ENCODE measurements at regions of chr16 and their contacts with region 1.

Region 1: GRCh38 chr16:22190776-22191531 is 15.1 kb upstream of the EEF2K start:
- DNase-seq: peak; percentile 99
- ATAC-seq: peak; percentile 66
- H3K4me3 Mint-ChIP-seq: peak overlapping the region; percentile 86
- H3K27ac Mint-ChIP-seq: peak overlapping the region; percentile 99
- H3K4me1 Mint-ChIP-seq: peaks cover 57% of the 10 kb centered on the region
- H3K27me3 Mint-ChIP-seq: no peaks in the 10 kb centered on the region

Region 2: DNA sequence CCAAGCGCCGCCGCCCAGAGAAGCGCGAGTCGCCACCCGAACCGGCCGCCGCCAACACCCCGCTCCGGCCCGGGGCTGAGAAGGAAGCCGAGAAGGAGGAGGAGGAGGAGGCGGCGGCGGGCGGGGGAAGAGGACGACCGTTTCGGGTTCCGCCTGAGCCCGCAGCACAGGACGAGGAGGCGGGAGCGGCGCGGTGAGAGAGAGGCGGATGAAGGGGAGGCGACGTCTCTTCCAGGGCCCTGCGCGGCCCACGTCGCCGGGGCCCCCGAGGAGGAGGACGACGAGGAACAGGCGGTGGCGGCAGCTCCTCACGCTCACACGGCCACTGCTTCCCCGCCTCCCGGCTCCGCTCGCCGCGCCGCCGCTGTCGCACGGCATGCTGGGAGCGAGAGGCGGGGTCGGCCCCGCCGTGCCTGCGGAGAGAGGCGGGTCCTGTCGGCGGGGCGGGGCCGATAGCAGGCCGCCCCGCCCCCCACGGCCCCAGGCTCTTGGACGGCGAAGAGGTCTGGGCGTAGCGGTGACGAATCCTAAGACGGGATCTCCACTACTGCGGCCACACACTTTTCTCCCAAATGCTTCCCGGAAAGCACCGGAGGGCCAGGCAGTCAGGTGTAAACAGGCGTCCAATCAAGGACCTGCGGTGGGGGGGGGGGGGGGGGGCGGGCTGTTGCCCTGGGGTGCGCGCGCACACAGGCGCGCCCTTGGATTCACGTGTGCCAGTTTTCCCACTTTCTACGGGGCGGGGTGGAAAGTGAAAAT is 688.9 kb before region 1 on chr16:
- CTCF ChIA-PET with region 1: no interaction called
- POLR2A ChIA-PET with region 1: no interaction called
- intact Hi-C with region 1: loop called in 1 of 2 experiments (anchors 5 kb)
- DNase-seq: peak; percentile 97
- ATAC-seq: peak; percentile 75
- H3K4me3 Mint-ChIP-seq: peak overlapping the region; percentile 83
- H3K27ac Mint-ChIP-seq: peak overlapping the region; percentile 93
- H3K4me1 Mint-ChIP-seq: peaks cover 24% of the 10 kb centered on the region
- H3K27me3 Mint-ChIP-seq: no peaks in the 10 kb centered on the region

Region 3: DNA sequence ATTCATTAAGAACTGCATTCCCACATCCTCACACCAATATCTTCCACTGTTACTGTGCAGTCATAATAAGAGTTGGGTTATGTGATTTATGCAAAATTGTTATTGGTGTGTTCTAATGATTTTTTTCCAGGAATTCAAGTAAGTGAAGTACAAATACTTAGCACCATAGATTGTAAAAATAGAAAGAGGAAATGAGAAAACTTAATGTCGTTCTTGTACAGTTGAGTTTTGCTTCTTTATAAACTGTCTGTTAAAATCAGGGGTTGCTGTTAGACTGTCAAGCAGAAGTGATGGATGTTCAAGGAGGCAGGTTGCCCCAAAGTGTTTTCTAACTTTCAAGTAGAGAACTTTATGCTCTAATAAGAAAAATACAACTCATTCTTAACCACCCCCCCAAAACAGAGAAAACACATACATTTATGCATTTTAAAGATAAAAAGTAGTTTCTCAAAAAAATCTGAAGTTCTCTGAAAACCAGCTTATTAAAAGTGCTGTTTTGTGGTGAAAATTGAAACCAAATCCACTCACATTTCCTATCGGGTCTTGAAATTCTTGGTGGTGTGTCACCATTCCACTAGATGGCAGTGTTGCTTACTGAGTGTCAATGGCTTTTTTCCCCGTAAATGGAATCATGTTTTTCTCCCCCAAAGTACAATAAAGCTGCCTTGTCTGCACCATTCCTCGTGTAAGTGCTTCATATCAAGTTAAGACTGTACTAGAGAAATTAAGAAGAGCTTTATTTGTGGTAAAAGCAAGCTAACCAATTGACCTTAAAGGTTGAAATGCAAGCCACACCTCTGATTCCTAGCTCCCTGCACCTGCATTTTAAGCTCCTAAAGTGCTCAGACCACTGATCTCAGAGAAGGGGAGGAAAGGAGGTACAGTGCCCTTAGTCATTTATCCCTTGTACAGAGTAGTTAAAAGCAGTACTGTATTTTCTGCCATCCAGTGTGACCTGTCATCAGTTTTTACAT is 533.9 kb before region 1 on chr16:
- CTCF ChIA-PET with region 1: no interaction called
- POLR2A ChIA-PET with region 1: no interaction called
- intact Hi-C with region 1: loop called in 1 of 2 experiments (anchors 5 kb)
- DNase-seq: peak; percentile 40
- ATAC-seq: no peak
- H3K4me3 Mint-ChIP-seq: no peak overlapping the region
- H3K27ac Mint-ChIP-seq: no peak overlapping the region
- H3K4me1 Mint-ChIP-seq: peaks cover 41% of the 10 kb centered on the region
- H3K27me3 Mint-ChIP-seq: no peaks in the 10 kb centered on the region

Region 4: GRCh38 chr16:22007509-22008214 is 183.3 kb before region 1 on chr16 and contains the start of gene MOSMO:
- CTCF ChIA-PET with region 1: interaction called, 64 read pairs
- POLR2A ChIA-PET with region 1: no interaction called
- intact Hi-C with region 1: loop called in 1 of 2 experiments (anchors 1 kb)
- DNase-seq: peak; percentile 81
- ATAC-seq: peak; percentile 89
- H3K4me3 Mint-ChIP-seq: peak within 1 kb of the TSS; percentile 84
- H3K27ac Mint-ChIP-seq: peak within 1 kb of the TSS; percentile 79
- H3K4me1 Mint-ChIP-seq: peaks cover 42% of the 10 kb centered on the region
- H3K27me3 Mint-ChIP-seq: no peaks in the 10 kb centered on the region
- total RNA-seq, gene MOSMO: 7.7 to 8.0 TPM

Region 5: DNA sequence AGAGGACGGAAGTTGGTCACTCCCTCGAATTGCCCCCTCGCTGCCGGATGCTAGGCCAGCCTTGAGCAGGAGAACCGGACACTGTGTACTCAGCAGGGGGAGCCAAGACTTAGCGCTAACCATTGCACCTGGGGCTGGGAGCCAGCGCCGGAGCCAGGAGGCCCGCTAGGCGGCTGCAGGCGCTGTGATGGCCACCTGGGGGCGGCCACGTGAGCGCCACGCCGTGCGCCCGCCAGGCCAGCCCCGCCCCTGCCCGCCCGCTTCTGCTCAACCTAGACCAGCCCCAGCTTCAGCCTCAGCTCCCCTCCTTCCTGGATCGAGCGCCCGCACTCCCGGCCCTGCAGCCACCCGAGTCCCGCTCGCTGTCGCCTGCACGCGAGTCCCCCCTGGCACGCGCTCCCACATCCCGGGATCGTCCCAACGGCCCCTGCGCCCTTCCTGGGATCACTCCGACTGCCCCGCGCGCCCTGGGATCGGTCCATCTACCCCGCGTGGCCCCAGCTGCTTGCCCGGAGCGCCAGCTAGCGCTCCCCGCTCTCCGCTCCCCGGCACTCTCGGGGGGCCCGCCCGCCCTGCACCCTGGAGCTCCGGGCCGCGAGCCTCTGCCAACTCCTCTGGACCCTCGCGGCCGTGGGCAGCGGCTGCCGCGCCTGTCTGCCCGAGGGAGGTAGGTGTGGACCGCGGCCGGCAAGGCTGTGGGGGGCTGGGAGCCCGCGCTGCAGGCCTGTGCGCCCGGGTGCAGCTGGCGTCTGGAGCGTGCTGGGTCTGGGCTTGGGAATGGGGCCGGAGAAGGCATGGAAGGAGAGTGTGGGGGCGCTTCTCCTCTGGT is 15.3 kb after region 1 on chr16 and contains the start of gene EEF2K:
- CTCF ChIA-PET with region 1: interaction called, 16 read pairs
- POLR2A ChIA-PET with region 1: interaction called, 11 read pairs
- intact Hi-C with region 1: loop called (anchors 1 kb)
- DNase-seq: peak; percentile 94
- ATAC-seq: peak; percentile 88
- H3K4me3 Mint-ChIP-seq: peak within 1 kb of the TSS; percentile 91
- H3K27ac Mint-ChIP-seq: peak within 1 kb of the TSS; percentile 89
- H3K4me1 Mint-ChIP-seq: peaks cover 36% of the 10 kb centered on the region
- H3K27me3 Mint-ChIP-seq: no peaks in the 10 kb centered on the region
- total RNA-seq, gene EEF2K: 23.9 to 28.3 TPM

Region 6: DNA sequence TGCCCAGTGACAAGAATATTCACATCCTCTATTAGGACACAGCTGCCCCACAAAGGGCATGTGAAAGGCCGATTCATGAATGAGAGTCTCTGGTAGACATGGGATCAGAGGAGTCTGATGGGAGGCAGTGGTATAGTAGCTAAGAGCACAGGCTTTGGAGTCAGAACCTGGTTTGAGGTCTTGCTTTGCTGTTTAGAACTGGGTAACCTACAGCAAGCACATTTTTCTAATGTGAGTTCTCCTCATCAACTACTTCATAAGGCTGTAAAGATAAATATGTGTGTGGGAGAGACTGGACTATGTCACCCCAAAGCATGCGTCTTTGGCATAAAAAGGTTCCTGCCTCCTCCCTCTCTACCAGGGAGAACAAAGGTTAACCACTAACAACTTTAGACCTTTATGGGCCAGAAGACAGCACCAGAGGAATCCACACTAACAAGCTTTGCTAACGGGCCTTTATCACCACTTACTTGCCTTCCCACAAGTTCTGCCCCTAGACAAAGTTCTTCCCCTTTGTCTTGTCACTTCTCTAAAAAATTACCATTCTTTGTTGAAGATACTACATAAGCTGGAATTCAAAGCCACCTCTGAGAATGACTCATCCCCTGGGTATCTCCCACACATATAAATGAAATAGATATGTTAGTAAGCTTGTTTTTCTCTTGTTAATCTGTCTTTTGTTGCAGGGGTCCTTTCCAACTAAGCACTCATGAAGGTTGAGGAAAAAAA is 162.4 kb after region 1 on chr16:
- CTCF ChIA-PET with region 1: no interaction called
- POLR2A ChIA-PET with region 1: no interaction called
- intact Hi-C with region 1: loop called in 1 of 2 experiments (anchors 5 kb)
- DNase-seq: no peak
- ATAC-seq: peak; percentile 76
- H3K4me3 Mint-ChIP-seq: no peak overlapping the region
- H3K27ac Mint-ChIP-seq: peak overlapping the region; percentile 90
- H3K4me1 Mint-ChIP-seq: peaks cover 62% of the 10 kb centered on the region
- H3K27me3 Mint-ChIP-seq: no peaks in the 10 kb centered on the region